ENCODE measurements at regions of chr14 and their contacts with region 1.

Region 1: DNA sequence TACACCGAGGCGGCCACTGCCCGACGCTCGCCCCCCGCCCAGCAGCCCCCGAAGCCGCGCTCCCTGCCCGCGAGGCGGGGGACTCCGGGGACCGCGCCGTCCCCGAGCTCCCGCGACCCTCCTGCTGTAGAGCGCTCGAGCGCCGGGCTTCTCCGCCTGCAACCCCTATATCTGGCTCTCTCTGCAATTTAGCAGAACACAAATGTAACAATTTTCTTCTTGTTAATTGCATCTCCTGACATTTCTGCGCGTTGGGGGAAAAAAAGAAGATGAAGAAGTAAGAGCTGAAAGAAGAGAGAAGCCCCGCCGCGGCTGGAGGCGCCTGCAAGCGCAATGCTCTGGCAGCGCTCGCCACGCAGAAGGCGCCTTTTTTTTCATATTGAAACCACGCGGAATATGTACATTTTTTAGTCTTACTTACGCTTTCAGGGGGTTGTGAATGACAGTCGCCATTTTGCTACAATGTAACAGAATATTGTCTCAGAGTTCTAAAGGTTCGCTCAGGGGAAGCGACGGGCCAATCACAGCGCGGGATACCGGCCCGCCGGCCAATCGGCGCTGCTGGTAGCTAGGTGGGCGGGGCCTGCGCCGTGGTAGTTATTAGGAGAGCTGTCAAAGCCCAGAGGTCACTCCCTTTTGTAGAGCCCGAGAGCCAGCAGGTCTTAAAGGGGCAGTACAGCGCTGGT is at the start of gene DPF3:
- DNase-seq: peak; percentile 97
- H3K4me3 ChIP-seq: peak within 1 kb of the TSS; percentile 72 to 99 (median 92)
- H3K27ac ChIP-seq: peak within 1 kb of the TSS; percentile 66
- H3K4me1 ChIP-seq: peaks cover 27% of the 10 kb centered on the region
- H3K27me3 ChIP-seq: no peaks in the 10 kb centered on the region
- CTCF ChIP-seq: no peak
- POLR2A ChIP-seq: peak; percentile 44
- total RNA-seq, gene DPF3: 3.5 and 8.1 TPM in 2 replicates

Region 2: GRCh38 chr14:72643317-72643801 is 250.4 kb before region 1 on chr14:
- CTCF ChIA-PET with region 1: interaction called, 4 read pairs
- POLR2A ChIA-PET with region 1: no interaction called
- dilution Hi-C with region 1: no loop called
- intact Hi-C with region 1: loop called (anchors 1 kb)
- DNase-seq: peak; percentile 96
- H3K4me3 ChIP-seq: no peak overlapping the region
- H3K27ac ChIP-seq: peak overlapping the region; percentile 96
- H3K4me1 ChIP-seq: peaks cover 31% of the 10 kb centered on the region
- H3K27me3 ChIP-seq: no peaks in the 10 kb centered on the region
- CTCF ChIP-seq: peak in 1 of 2 donors; percentile 8
- POLR2A ChIP-seq: peak; percentile 47

Region 3: GRCh38 chr14:72801381-72801812 is 92.4 kb before region 1 on chr14:
- CTCF ChIA-PET with region 1: interaction called, 4 read pairs
- POLR2A ChIA-PET with region 1: no interaction called
- dilution Hi-C with region 1: no loop called
- intact Hi-C with region 1: loop called (anchors 2 kb)
- DNase-seq: peak; percentile 93
- H3K4me3 ChIP-seq: no peak overlapping the region
- H3K27ac ChIP-seq: peak overlapping the region; percentile 95
- H3K4me1 ChIP-seq: peaks cover 22% of the 10 kb centered on the region
- H3K27me3 ChIP-seq: no peaks in the 10 kb centered on the region
- CTCF ChIP-seq: no peak
- POLR2A ChIP-seq: no peak

Region 4: DNA sequence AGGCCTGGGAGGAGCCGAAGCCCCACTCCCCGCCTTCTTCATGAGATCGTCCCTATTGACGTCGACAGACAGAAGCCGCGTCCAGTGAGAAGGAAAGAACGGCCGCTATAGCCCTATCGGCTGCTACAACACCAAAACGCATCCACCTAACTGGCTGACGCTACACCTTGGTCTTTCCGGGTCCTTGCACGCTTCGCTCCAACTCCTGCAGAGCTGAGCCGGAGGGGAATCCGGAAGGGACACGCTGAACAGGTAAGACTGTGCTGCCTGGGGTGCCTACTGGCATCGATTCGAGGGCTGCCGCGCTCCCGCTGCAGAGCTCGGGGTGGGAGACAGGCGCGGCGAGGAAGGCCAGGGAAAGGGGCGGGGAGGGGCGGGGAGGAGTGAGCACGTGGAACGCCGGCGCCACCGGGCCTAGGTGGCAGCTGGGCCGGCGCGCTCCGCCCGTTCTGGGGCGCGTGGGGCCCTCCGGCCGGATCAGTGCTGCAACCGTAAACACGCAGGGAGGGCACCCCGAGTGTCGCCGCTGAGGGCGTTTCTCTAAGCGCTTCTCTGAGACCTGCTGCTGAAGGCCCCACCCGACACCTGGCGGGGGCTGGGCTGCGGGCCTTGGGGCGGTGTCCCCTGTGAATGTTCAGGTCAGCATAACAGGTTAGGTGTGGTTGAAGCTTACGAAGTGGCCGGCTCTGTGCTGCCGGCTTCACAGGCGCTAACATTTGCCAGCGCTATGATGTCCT is 32.7 kb after region 1 on chr14 and contains the start of gene DCAF4:
- CTCF ChIA-PET with region 1: no interaction called
- POLR2A ChIA-PET with region 1: no interaction called
- dilution Hi-C with region 1: no loop called
- intact Hi-C with region 1: loop called (anchors 1 kb)
- DNase-seq: peak; percentile 98
- H3K4me3 ChIP-seq: peak within 1 kb of the TSS; percentile 67 to 89 (median 71)
- H3K27ac ChIP-seq: peak within 1 kb of the TSS; percentile 71
- H3K4me1 ChIP-seq: peaks cover 10% of the 10 kb centered on the region
- H3K27me3 ChIP-seq: no peaks in the 10 kb centered on the region
- CTCF ChIP-seq: no peak
- POLR2A ChIP-seq: no peak
- total RNA-seq, gene DCAF4: 8.6 and 14.5 TPM in 2 replicates